Ascending aorta (tissue), 2 donors: ENCODE measurements at regions of chr11 and their contacts with region 1.

Region 1: DNA sequence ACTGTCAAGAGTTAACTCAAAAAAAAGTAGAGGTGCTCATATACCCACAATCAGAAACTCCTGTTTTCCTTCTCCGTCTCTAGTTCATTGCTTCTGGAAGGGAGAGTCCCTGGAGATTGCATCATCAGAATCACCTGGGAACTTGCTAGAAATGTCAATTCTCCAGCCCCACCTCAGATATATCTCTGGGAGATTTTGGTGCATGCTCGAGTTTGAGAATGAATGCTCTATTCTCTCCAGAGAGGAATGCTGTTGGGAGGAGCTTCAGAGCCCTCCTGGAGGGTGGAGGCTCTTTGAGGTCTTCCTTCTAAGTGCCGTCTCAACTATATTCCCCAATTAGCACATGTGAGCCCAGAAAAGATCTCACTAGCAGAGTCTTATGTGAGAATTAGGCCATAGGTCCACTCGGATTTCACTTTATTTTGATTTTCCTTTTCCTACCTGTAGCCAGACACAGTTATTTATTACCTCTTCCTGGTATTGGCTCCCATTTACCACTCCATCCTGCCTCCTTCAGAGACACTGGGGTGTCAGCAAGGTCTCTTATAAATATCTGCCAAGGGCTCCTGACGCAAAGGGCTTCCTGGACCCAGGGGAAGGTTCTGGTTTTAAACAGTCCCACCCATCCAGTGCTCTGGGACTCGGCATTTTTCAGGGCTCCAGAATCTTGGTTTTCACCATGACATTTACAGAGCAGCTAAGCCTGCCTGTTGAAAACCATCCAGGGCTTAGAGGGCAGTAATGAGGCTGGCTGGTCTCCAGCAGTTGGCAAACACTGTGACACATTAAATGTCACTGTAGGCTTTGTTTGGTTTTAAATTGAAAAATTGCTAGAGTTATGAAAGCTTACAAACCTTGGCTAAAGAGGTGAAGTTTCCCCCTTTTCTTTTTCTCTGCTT is 136.2 kb downstream of the CD44 start:
- DNase-seq: peak; percentile 18 to 87
- H3K4me3 ChIP-seq: no peak overlapping the region
- H3K27ac ChIP-seq: peak overlapping the region; percentile 72 to 78
- H3K4me1 ChIP-seq: peaks cover 6 to 18% of the 10 kb centered on the region in 2 donors
- H3K27me3 ChIP-seq: no peaks in the 10 kb centered on the region
- CTCF ChIP-seq: peak in 1 of 3 experiments; percentile 17

Region 2: GRCh38 chr11:35260342-35260985 is 14.7 kb before region 1 on chr11:
- intact Hi-C with region 1: loop called (anchors 2 kb)
- DNase-seq: peak in 1 of 2 donors; percentile 78
- H3K4me3 ChIP-seq: peak overlapping the region in 1 of 2 donors; percentile 23
- H3K27ac ChIP-seq: peak overlapping the region; percentile 20 to 51
- H3K4me1 ChIP-seq: peaks cover 5 to 21% of the 10 kb centered on the region in 2 donors
- H3K27me3 ChIP-seq: no peaks in the 10 kb centered on the region
- CTCF ChIP-seq: no peak